ENCODE measurements at regions of chr15 and their contacts with region 1.

Region 1: DNA sequence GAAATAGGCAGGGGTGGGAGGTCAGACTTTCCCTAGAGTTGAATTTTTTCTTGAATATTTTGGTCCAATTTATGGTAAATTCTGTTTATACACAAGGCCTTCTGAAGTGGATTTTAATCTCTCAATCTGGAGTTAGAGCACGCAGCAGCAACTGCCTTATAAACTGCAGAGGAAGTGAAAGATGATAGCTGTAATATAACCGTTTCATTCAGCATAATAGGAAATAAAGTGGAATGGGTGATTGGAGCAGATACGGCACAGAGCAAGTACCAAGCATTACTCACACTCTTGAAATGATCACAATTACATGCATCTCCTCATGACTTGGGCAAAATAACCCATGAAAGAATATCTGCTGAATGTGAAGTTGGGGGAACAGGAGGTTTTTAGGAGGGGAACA is 106.8 kb downstream of the ARRDC4 start:
- DNase-seq: peak; percentile 7
- H3K4me3 ChIP-seq: no peak overlapping the region
- H3K27ac ChIP-seq: no peak overlapping the region
- H3K4me1 ChIP-seq: no peaks in the 10 kb centered on the region
- H3K27me3 ChIP-seq: no peaks in the 10 kb centered on the region
- CTCF ChIP-seq: no peak
- POLR2A ChIP-seq: no peak

Region 2: DNA sequence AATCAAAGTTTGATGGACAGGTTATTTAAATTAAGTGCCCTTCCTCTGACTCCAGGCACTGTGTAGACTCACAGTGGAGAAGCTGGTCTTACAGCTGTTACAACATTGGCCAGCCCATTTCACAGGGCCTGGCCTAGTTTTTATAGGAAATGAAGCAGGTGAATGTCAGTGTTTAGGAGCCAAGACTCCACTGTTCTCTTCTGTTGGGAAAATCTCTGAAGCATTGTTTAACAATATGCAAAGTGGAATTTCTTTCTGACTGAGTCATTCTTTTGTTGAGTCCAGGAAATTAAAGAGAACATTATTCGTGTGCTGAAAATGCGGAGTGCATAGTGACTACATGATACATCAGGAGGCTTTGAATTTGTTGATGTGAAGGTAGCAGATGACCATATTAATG is 42.1 kb before region 1 on chr15:
- CTCF ChIA-PET with region 1: no interaction called
- POLR2A ChIA-PET with region 1: no interaction called
- dilution Hi-C with region 1: no loop called
- intact Hi-C with region 1: loop called (anchors 5 kb)
- DNase-seq: peak; percentile 93
- H3K4me3 ChIP-seq: no peak overlapping the region
- H3K27ac ChIP-seq: peak overlapping the region; percentile 77
- H3K4me1 ChIP-seq: peaks cover 31% of the 10 kb centered on the region
- H3K27me3 ChIP-seq: no peaks in the 10 kb centered on the region
- CTCF ChIP-seq: no peak
- POLR2A ChIP-seq: no peak

Region 3: DNA sequence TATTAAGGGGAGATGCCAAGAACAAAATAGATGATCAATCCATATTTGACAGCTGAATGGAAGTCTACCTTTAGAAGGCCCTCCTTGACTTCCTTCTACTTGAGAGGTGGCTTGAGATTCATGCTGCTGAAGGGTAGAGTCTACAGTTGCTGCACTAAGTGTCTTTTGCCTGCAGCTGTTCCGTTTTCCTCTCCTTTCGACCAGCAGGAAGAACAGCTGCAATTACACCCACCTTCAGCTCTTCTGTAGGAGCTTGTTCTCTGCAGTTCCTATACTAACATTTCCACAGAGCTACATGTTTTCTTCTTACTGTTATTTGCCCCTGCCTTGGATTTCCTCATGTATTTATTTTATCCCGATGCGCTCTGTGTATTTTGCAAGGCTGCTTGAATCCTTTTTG is 27.7 kb before region 1 on chr15:
- CTCF ChIA-PET with region 1: no interaction called
- POLR2A ChIA-PET with region 1: no interaction called
- dilution Hi-C with region 1: no loop called
- intact Hi-C with region 1: loop called (anchors 1 kb)
- DNase-seq: no peak
- H3K4me3 ChIP-seq: no peak overlapping the region
- H3K27ac ChIP-seq: no peak overlapping the region
- H3K4me1 ChIP-seq: no peaks in the 10 kb centered on the region
- H3K27me3 ChIP-seq: no peaks in the 10 kb centered on the region
- CTCF ChIP-seq: no peak
- POLR2A ChIP-seq: no peak

Region 4: GRCh38 chr15:98123834-98124474 is 56.6 kb after region 1 on chr15:
- CTCF ChIA-PET with region 1: no interaction called
- POLR2A ChIA-PET with region 1: no interaction called
- dilution Hi-C with region 1: no loop called
- intact Hi-C with region 1: loop called (anchors 10 kb)
- DNase-seq: no peak
- H3K4me3 ChIP-seq: no peak overlapping the region
- H3K27ac ChIP-seq: no peak overlapping the region
- H3K4me1 ChIP-seq: no peaks in the 10 kb centered on the region
- H3K27me3 ChIP-seq: no peaks in the 10 kb centered on the region
- CTCF ChIP-seq: no peak
- POLR2A ChIP-seq: no peak

Region 5: DNA sequence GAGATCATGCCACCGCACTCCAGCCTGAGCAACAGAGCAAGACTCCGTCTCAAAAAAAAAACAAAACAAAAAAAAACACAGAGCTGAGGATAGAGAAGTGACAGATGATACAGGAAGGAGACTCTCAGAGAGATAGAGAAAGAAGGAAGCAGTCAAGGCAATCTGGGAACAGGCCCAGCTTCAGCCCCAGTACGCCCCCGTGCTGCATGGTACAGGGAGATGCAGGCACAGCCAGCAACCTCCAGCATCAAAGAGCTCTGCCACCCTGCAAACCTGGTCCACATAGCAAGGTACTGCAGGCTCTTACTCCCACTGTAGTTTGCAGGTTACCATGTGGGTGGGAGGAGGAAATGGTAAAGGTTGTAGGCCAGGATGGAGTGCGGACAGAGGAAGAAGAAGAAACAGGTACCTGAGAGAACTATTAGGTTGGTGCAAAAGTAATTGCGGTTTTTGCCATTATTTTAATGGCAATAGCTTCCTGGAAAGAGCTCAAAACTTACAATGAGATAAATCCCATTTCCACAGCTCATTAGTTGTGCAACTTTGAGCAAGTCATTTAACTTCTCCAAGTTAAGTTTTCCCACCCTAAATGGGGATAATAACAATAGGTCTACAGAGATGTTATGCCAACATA is 146.1 kb after region 1 on chr15:
- CTCF ChIA-PET with region 1: no interaction called
- POLR2A ChIA-PET with region 1: no interaction called
- dilution Hi-C with region 1: no loop called
- intact Hi-C with region 1: no loop called
- DNase-seq: no peak
- H3K4me3 ChIP-seq: no peak overlapping the region
- H3K27ac ChIP-seq: no peak overlapping the region
- H3K4me1 ChIP-seq: no peaks in the 10 kb centered on the region
- H3K27me3 ChIP-seq: no peaks in the 10 kb centered on the region
- CTCF ChIP-seq: no peak
- POLR2A ChIP-seq: no peak